Caco-2 (cell line): ENCODE measurements at regions of chr13 and their contacts with region 1.

Region 1: DNA sequence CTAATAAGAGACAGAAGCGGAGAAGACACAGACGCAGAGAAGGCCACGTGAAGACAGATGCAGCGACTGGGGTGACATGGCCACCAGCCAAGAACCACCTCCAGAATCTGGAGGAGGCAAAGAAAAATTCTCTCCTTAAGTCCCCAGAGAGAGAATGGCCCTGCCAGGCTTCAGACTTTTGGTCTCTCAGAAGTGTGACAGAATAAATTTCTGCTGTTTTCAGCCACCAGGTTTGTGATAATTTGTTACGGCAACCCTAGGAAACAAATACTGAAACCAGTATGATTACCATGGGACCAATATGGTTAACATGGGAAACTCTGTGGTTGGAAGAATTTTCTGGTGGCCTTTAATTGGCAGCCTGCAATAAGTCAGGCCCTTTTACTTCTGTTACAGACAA is 63.9 kb upstream of the DOCK9 start:
- DNase-seq: no peak
- H3K4me3 ChIP-seq: no peak overlapping the region
- H3K4me3 Mint-ChIP-seq: no peak overlapping the region
- H3K27ac Mint-ChIP-seq: no peak overlapping the region
- H3K4me1 ChIP-seq: peaks cover 32% of the 10 kb centered on the region
- H3K4me1 Mint-ChIP-seq: peaks cover 56% of the 10 kb centered on the region
- H3K27me3 ChIP-seq: no peaks in the 10 kb centered on the region
- H3K27me3 Mint-ChIP-seq: no peaks in the 10 kb centered on the region
- CTCF ChIP-seq: no peak

Region 2: GRCh38 chr13:99059498-99060075 is 17.8 kb after region 1 on chr13:
- CTCF ChIA-PET with region 1: no interaction called
- POLR2A ChIA-PET with region 1: no interaction called
- intact Hi-C with region 1: loop called (anchors 2 kb)
- DNase-seq: no peak
- H3K4me3 ChIP-seq: no peak overlapping the region
- H3K4me3 Mint-ChIP-seq: no peak overlapping the region
- H3K27ac Mint-ChIP-seq: no peak overlapping the region
- H3K4me1 ChIP-seq: peaks cover 33% of the 10 kb centered on the region
- H3K4me1 Mint-ChIP-seq: peaks cover 40% of the 10 kb centered on the region
- H3K27me3 ChIP-seq: no peaks in the 10 kb centered on the region
- H3K27me3 Mint-ChIP-seq: no peaks in the 10 kb centered on the region
- CTCF ChIP-seq: no peak